ENCODE measurements at regions of chr6 and their contacts with region 1.

Region 1: GRCh38 chr6:85058806-85059205 is 294.4 kb upstream of the TBX18 start:
- DNase-seq: no peak
- ATAC-seq: no peak
- H3K4me3 ChIP-seq: no peak overlapping the region
- H3K27ac ChIP-seq: no peak overlapping the region
- H3K4me1 ChIP-seq: no peaks in the 10 kb centered on the region
- H3K27me3 ChIP-seq: no peaks in the 10 kb centered on the region
- CTCF ChIP-seq: no peak

Region 2: DNA sequence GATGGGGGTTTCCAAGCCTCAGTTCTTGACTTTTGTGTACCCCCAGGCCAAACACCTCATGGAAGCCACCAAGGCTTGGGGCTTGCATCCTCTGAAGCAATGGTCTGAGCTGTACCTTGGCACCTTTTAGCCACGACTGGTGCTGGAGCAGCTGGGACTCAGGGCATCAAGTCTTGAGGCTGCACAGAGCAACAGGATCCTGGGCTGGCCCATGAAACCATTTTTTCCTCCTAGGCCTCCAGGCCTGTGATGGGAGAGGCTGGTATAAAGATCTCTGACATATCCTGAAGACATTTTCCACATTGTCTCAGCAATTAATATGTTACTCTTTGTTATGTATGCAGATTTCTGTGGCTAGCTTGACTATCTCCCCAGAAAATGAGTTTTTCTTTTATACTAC is 25.3 kb before region 1 on chr6:
- CTCF ChIA-PET with region 1: no interaction called
- POLR2A ChIA-PET with region 1: no interaction called
- in situ Hi-C with region 1: no loop called
- intact Hi-C with region 1: loop called (anchors 1 kb)
- DNase-seq: no peak
- ATAC-seq: no peak
- H3K4me3 ChIP-seq: no peak overlapping the region
- H3K27ac ChIP-seq: no peak overlapping the region
- H3K4me1 ChIP-seq: no peaks in the 10 kb centered on the region
- H3K27me3 ChIP-seq: no peaks in the 10 kb centered on the region
- CTCF ChIP-seq: no peak

Region 3: GRCh38 chr6:85273870-85274269 is 215.1 kb after region 1 on chr6:
- CTCF ChIA-PET with region 1: no interaction called
- POLR2A ChIA-PET with region 1: no interaction called
- in situ Hi-C with region 1: no loop called
- intact Hi-C with region 1: no loop called
- DNase-seq: no peak
- ATAC-seq: no peak
- H3K4me3 ChIP-seq: no peak overlapping the region
- H3K27ac ChIP-seq: no peak overlapping the region
- H3K4me1 ChIP-seq: no peaks in the 10 kb centered on the region
- H3K27me3 ChIP-seq: no peaks in the 10 kb centered on the region
- CTCF ChIP-seq: no peak